WTC11 (cell line): ENCODE measurements at regions of chr4 and their contacts with region 1.

Region 1: GRCh38 chr4:165131247-165131832 is 18.7 kb upstream of the TMEM192 start:
- DNase-seq: peak; percentile 86
- ATAC-seq: peak; percentile 87
- H3K4me3 Mint-ChIP-seq: no peak overlapping the region
- H3K27ac Mint-ChIP-seq: no peak overlapping the region
- H3K4me1 Mint-ChIP-seq: no peaks in the 10 kb centered on the region
- H3K27me3 Mint-ChIP-seq: no peaks in the 10 kb centered on the region
- CTCF ChIP-seq: peak; percentile 87

Region 2: GRCh38 chr4:164706675-164707074 is 424.7 kb before region 1 on chr4:
- CTCF ChIA-PET with region 1: no interaction called
- POLR2A ChIA-PET with region 1: no interaction called
- DNase-seq: peak; percentile 14
- ATAC-seq: peak; percentile 81
- H3K4me3 Mint-ChIP-seq: no peak overlapping the region
- H3K27ac Mint-ChIP-seq: no peak overlapping the region
- H3K4me1 Mint-ChIP-seq: no peaks in the 10 kb centered on the region
- H3K27me3 Mint-ChIP-seq: no peaks in the 10 kb centered on the region
- CTCF ChIP-seq: no peak

Region 3: GRCh38 chr4:165112368-165113139 is 18.8 kb before region 1 on chr4 and contains the start of gene TMEM192:
- CTCF ChIA-PET with region 1: interaction called, 33 read pairs
- POLR2A ChIA-PET with region 1: no interaction called
- DNase-seq: peak; percentile 93
- ATAC-seq: peak; percentile 98
- H3K4me3 Mint-ChIP-seq: peak within 1 kb of the TSS; percentile 80
- H3K27ac Mint-ChIP-seq: peak within 1 kb of the TSS; percentile 82
- H3K4me1 Mint-ChIP-seq: peaks cover 15% of the 10 kb centered on the region
- H3K27me3 Mint-ChIP-seq: peaks cover 3% of the 10 kb centered on the region; the same call in 1 of the 2 replicates
- CTCF ChIP-seq: no peak
- total RNA-seq, gene TMEM192: 10.5 to 11.2 TPM (median 11.0 TPM) in 3 replicates

Region 4: GRCh38 chr4:165327211-165328100 is 196.1 kb after region 1 on chr4 and contains the start of gene MSMO1:
- CTCF ChIA-PET with region 1: interaction called, 28 read pairs
- POLR2A ChIA-PET with region 1: interaction called, 4 read pairs
- DNase-seq: peak; percentile 99
- ATAC-seq: peak; percentile 97
- H3K4me3 Mint-ChIP-seq: no peak within 1 kb of the TSS
- H3K27ac Mint-ChIP-seq: peak within 1 kb of the TSS; percentile 95
- H3K4me1 Mint-ChIP-seq: peaks cover 40% of the 10 kb centered on the region
- H3K27me3 Mint-ChIP-seq: no peaks in the 10 kb centered on the region
- CTCF ChIP-seq: no peak
- total RNA-seq, gene MSMO1: 72.9 to 89.9 TPM (median 86.8 TPM) in 3 replicates

Region 5: GRCh38 chr4:165343353-165344191 is 212.2 kb after region 1 on chr4:
- CTCF ChIA-PET with region 1: interaction called, 123 read pairs
- POLR2A ChIA-PET with region 1: no interaction called
- DNase-seq: no peak
- ATAC-seq: peak; percentile 70
- H3K4me3 Mint-ChIP-seq: no peak overlapping the region
- H3K27ac Mint-ChIP-seq: 0 out of 2 replicates have a peak overlapping the region, but pooled peaks have one; percentile 70
- H3K4me1 Mint-ChIP-seq: no peaks in the 10 kb centered on the region
- H3K27me3 Mint-ChIP-seq: no peaks in the 10 kb centered on the region
- CTCF ChIP-seq: no peak

Region 6: GRCh38 chr4:165461159-165461821 is 329.9 kb after region 1 on chr4:
- CTCF ChIA-PET with region 1: interaction called, 16 read pairs
- POLR2A ChIA-PET with region 1: no interaction called
- DNase-seq: no peak
- ATAC-seq: no peak
- H3K4me3 Mint-ChIP-seq: no peak overlapping the region
- H3K27ac Mint-ChIP-seq: no peak overlapping the region
- H3K4me1 Mint-ChIP-seq: peaks cover 35% of the 10 kb centered on the region
- H3K27me3 Mint-ChIP-seq: no peaks in the 10 kb centered on the region; the same call in 1 of the 2 replicates
- CTCF ChIP-seq: no peak